ENCODE measurements at regions of chr1 and their contacts with region 1.

Region 1: DNA sequence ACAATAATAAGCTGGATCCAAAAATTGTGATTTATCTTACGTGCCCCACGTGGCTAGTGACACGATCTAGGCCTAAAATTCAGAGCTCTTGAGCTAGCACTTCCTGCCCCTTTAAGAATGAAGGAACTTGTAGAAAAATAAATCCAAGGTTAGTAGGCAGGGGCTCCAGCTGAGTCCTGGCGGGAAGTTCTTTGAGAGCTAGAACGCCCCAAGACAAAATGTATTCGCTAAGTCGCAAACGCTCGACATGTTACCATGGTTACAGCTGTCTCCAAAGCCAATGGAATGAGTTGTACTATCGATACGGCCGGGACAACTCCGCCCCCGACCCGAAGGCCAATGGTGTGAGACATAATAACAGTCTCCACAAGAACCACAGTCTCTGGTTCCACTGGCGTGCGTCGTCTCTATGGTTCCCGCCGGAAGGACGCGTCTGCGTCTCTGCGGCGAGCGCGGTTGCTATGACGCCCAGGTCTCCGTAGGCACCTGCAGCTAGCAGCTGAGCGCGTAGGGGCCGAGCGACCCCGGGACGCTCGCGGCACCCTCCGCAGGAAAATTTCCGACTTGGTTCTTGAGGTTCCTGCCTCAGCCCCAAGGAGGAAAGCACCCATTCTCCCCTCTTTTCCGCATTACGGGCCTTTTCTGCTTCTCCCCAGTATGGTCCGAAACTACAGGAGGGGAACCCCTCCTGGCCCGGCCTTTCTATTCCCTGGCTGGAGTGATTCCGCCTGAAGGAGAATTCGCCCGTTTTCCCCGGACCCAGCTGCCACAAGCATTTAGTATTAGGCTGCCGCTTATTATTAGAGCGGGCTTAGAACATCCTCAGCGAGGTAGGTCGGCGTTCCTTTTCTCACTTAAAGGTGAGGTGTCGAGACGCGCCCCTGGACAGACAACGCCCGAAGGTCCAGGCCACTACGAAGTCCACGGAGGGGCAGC is at the start of gene CCDC30:
- DNase-seq: peak; percentile 91 to 99 (median 95)
- ATAC-seq: peak; percentile 97
- H3K4me3 ChIP-seq: peak within 1 kb of the TSS; percentile 69
- H3K4me3 Mint-ChIP-seq: peak within 1 kb of the TSS; percentile 87
- H3K27ac ChIP-seq: peak within 1 kb of the TSS; percentile 49 to 86
- H3K27ac Mint-ChIP-seq: peak within 1 kb of the TSS; percentile 86
- H3K4me1 ChIP-seq: peaks cover 15% of the 10 kb centered on the region
- H3K4me1 Mint-ChIP-seq: peaks cover 52% of the 10 kb centered on the region
- H3K27me3 ChIP-seq: no peaks in the 10 kb centered on the region
- H3K27me3 Mint-ChIP-seq: peaks cover 4% of the 10 kb centered on the region
- CTCF ChIP-seq: no peak
- total RNA-seq, gene CCDC30: 1.2 to 1.3 TPM

Region 2: DNA sequence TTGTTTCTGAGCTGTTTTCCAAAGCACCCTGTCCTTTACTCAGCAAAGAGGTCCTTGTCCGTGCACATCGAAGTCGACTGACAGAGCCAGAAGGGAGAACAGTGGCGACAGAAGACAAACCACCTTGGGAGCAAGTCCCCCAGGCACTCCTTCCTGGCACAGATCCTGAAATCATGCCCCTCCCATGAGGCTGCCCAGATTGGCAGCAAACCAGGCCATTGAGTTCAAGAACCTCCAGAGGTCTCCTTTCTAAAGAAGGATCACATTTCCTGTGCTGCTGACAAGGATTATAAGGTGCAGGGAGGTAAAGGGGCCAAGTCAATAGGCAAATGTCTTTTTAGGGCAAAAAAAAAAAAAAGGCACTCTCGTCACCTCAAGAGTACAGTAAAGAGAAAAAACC is 459.7 kb before region 1 on chr1:
- CTCF ChIA-PET with region 1: no interaction called
- POLR2A ChIA-PET with region 1: no interaction called
- intact Hi-C with region 1: no loop called
- DNase-seq: no peak
- ATAC-seq: no peak
- H3K4me3 ChIP-seq: no peak overlapping the region
- H3K4me3 Mint-ChIP-seq: no peak overlapping the region
- H3K27ac ChIP-seq: no peak overlapping the region
- H3K27ac Mint-ChIP-seq: no peak overlapping the region
- H3K4me1 ChIP-seq: no peaks in the 10 kb centered on the region
- H3K4me1 Mint-ChIP-seq: peaks cover 3% of the 10 kb centered on the region
- H3K27me3 ChIP-seq: no peaks in the 10 kb centered on the region
- H3K27me3 Mint-ChIP-seq: no peaks in the 10 kb centered on the region
- CTCF ChIP-seq: no peak

Region 3: GRCh38 chr1:42403880-42404400 is 59.2 kb before region 1 on chr1:
- CTCF ChIA-PET with region 1: no interaction called
- POLR2A ChIA-PET with region 1: no interaction called
- intact Hi-C with region 1: no loop called
- DNase-seq: peak in 1 of 14 experiments; percentile 6
- ATAC-seq: no peak
- H3K4me3 ChIP-seq: no peak overlapping the region
- H3K4me3 Mint-ChIP-seq: no peak overlapping the region
- H3K27ac ChIP-seq: no peak overlapping the region
- H3K27ac Mint-ChIP-seq: no peak overlapping the region
- H3K4me1 ChIP-seq: no peaks in the 10 kb centered on the region
- H3K4me1 Mint-ChIP-seq: no peaks in the 10 kb centered on the region
- H3K27me3 ChIP-seq: peaks cover 0 to 2% of the 10 kb centered on the region in 2 experiments
- H3K27me3 Mint-ChIP-seq: peaks cover 12% of the 10 kb centered on the region
- CTCF ChIP-seq: no peak

Region 4: GRCh38 chr1:42657971-42658879 is 195.1 kb after region 1 on chr1 and contains the start of gene PPIH:
- CTCF ChIA-PET with region 1: no interaction called
- POLR2A ChIA-PET with region 1: interaction called, 5 read pairs
- intact Hi-C with region 1: loop called in 1 of 2 experiments (anchors 2 kb)
- DNase-seq: peak; percentile 87 to 97 (median 94)
- ATAC-seq: peak; percentile 98
- H3K4me3 ChIP-seq: peak within 1 kb of the TSS; percentile 94
- H3K4me3 Mint-ChIP-seq: peak within 1 kb of the TSS; percentile 95
- H3K27ac ChIP-seq: peak within 1 kb of the TSS; percentile 68 to 77
- H3K27ac Mint-ChIP-seq: peak within 1 kb of the TSS; percentile 88
- H3K4me1 ChIP-seq: peaks cover 18% of the 10 kb centered on the region
- H3K4me1 Mint-ChIP-seq: peaks cover 50% of the 10 kb centered on the region
- H3K27me3 ChIP-seq: no peaks in the 10 kb centered on the region
- H3K27me3 Mint-ChIP-seq: no peaks in the 10 kb centered on the region
- CTCF ChIP-seq: no peak
- total RNA-seq, gene PPIH: 29.4 to 32.6 TPM

Region 5: GRCh38 chr1:42846257-42847110 is 383.4 kb after region 1 on chr1 and contains the start of gene ZNF691:
- CTCF ChIA-PET with region 1: no interaction called
- POLR2A ChIA-PET with region 1: no interaction called
- intact Hi-C with region 1: loop called in 1 of 2 experiments (anchors 10 kb)
- DNase-seq: peak; percentile 73 to 96 (median 82)
- ATAC-seq: peak; percentile 98
- H3K4me3 ChIP-seq: peak within 1 kb of the TSS; percentile 96
- H3K4me3 Mint-ChIP-seq: peak within 1 kb of the TSS; percentile 94
- H3K27ac ChIP-seq: peak within 1 kb of the TSS in 1 of 2 donors; percentile 56
- H3K27ac Mint-ChIP-seq: peak within 1 kb of the TSS; percentile 67
- H3K4me1 ChIP-seq: peaks cover 19% of the 10 kb centered on the region
- H3K4me1 Mint-ChIP-seq: peaks cover 38% of the 10 kb centered on the region
- H3K27me3 ChIP-seq: no peaks in the 10 kb centered on the region
- H3K27me3 Mint-ChIP-seq: no peaks in the 10 kb centered on the region
- CTCF ChIP-seq: peak; percentile 47
- total RNA-seq, gene ZNF691: 1.2 to 1.7 TPM

Measured in CD4-positive, alpha-beta T cell (primary cell).